Activated CD4-positive, alpha-beta memory T cell treated with anti-CD3 and anti-CD28 coated beads, Interleukin-2, amount 10 ng/mL, durations not matched to agents 7 days and 5 days (primary cell): ENCODE measurements at regions of chr3 and their contacts with region 1.

Region 1: GRCh38 chr3:156554842-156555687 is at the start of gene SSR3:
- DNase-seq: peak; percentile 99
- H3K4me3 Mint-ChIP-seq: peak within 1 kb of the TSS; percentile 96
- H3K27ac Mint-ChIP-seq: peak within 1 kb of the TSS; percentile 84
- H3K4me1 Mint-ChIP-seq: peaks cover 48% of the 10 kb centered on the region
- H3K27me3 Mint-ChIP-seq: no peaks in the 10 kb centered on the region
- total RNA-seq, gene SSR3: 167 to 174 TPM

Region 2: GRCh38 chr3:156483961-156484787 is 70.9 kb before region 1 on chr3:
- CTCF ChIA-PET with region 1: interaction called, 6 read pairs
- POLR2A ChIA-PET with region 1: interaction called, 25 read pairs
- DNase-seq: peak; percentile 62
- H3K4me3 Mint-ChIP-seq: peak overlapping the region; percentile 72
- H3K27ac Mint-ChIP-seq: peak overlapping the region; percentile 88
- H3K4me1 Mint-ChIP-seq: peaks cover 42% of the 10 kb centered on the region
- H3K27me3 Mint-ChIP-seq: no peaks in the 10 kb centered on the region

Region 3: DNA sequence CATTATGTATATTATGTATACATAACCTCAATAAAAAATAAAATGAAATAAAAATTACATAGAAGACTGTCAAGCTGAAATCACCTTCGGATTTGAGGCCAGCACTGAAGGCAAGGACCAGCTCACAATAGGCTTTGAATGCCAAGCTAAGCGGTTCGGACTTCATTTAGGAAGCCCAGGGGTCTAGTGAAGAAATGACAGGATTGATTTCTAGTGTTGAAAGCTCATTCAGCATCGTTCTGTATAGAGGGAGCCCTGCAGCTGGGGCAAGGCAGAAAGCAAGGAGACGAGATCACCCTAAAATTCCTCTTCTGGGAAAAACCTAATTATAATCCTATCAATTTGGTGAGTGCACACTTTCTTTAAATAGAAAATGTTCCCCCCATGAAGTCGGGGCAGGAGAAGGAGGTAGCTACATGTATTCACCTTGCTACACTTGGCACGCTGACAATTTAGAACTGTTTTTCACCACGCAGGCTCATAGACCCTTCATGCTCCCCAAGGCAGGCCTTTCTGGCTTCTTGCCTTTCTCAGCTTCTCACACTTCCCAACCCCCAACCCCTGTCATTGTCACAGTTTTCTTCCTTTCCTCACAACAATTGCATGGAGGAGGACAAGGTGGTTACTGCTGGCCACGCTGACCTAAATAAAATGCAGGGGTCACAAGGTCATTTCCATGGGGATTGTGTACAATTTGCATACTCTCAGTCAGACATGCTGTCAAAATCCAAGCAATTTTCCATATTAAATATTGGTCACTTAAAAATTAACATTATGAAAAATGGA is 44.2 kb after region 1 on chr3:
- CTCF ChIA-PET with region 1: no interaction called
- POLR2A ChIA-PET with region 1: no interaction called
- DNase-seq: no peak
- H3K4me3 Mint-ChIP-seq: no peak overlapping the region
- H3K27ac Mint-ChIP-seq: no peak overlapping the region
- H3K4me1 Mint-ChIP-seq: peaks cover 15% of the 10 kb centered on the region
- H3K27me3 Mint-ChIP-seq: peaks cover 11% of the 10 kb centered on the region

Region 4: DNA sequence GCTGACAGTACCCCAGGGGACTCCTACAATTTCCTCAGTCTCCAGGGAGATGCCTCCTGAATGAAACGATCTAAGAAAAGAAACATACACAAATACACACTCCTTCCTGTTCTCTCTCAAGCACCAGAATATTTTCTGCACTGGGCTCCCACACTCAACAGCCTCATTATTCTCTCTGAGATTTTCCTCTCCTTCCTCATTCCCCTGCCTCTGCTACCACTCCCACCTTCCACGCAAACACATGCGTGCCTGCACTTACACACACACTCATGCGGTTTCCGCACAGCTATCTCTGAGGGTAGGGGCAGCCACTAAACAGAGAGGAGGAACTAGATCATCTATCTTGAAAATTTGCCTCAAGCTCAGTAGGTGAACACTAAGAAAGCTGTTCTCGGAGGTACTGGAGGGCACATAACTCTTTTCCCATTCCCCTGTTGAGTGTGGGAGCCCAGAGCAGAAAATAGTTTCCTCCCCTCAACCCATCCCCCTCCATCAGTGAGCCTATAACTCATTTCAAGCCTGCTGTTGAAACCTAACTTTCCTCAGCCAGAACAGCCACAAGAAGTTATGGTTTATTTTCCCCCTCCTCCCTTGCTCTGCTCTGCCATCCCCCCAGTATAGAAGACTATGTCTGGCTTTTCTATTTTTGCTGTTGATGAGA is 88.8 kb after region 1 on chr3:
- CTCF ChIA-PET with region 1: no interaction called
- POLR2A ChIA-PET with region 1: interaction called, 12 read pairs
- DNase-seq: peak; percentile 66
- H3K4me3 Mint-ChIP-seq: peak overlapping the region; percentile 43
- H3K27ac Mint-ChIP-seq: peak overlapping the region; percentile 80
- H3K4me1 Mint-ChIP-seq: peaks cover 23% of the 10 kb centered on the region
- H3K27me3 Mint-ChIP-seq: peaks cover 8% of the 10 kb centered on the region

Region 5: GRCh38 chr3:156664831-156665178 is 109.7 kb after region 1 on chr3:
- CTCF ChIA-PET with region 1: interaction called, 8 read pairs
- POLR2A ChIA-PET with region 1: interaction called, 26 read pairs
- DNase-seq: no peak
- H3K4me3 Mint-ChIP-seq: peak overlapping the region; percentile 59
- H3K27ac Mint-ChIP-seq: peak overlapping the region; percentile 92
- H3K4me1 Mint-ChIP-seq: peaks cover 68% of the 10 kb centered on the region
- H3K27me3 Mint-ChIP-seq: no peaks in the 10 kb centered on the region

Region 6: DNA sequence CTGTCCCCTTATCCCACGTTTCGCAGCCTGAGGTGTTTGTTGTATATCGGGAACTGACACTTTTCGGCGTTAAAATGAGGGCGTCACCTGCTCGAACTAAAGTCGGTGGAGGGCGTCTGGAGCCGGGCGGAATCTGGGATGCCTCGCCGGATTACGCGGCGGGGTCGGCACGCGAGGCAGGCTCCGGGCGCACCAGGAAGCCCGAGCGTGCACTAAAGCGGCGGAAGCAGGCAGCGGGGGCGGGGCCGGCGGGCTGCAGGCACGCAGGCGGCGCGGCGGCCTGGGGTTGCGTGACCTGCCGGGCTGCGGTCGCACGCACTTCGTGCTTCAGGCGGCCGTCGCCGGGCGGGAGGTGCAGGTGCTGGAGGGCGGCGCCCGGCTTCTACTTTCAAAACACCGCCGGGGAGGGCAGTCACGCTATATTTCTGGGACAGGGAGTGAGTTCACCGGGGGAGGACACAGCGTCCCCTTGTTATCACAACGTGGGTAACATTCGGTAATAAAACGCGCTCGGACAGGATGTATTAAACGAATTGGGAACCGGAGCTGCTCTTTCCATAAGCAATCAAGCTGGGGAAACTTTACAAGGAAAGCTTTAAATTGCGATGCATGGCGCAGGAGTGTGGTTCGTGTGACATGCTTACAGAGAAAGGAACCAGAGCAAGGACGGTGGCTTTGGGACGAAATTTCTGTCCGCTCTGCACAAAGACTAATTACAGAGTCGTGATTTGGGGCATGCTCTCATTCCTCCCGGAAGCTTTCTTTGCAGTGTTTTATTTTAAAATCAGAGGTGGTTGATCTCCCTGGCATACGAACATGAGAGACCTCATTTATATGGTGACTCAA is 262.0 kb after region 1 on chr3:
- CTCF ChIA-PET with region 1: interaction called, 3 read pairs
- POLR2A ChIA-PET with region 1: interaction called, 10 read pairs
- DNase-seq: peak; percentile 93
- H3K4me3 Mint-ChIP-seq: peak overlapping the region; percentile 86
- H3K27ac Mint-ChIP-seq: peak overlapping the region; percentile 96
- H3K4me1 Mint-ChIP-seq: peaks cover 71% of the 10 kb centered on the region
- H3K27me3 Mint-ChIP-seq: no peaks in the 10 kb centered on the region

Region 7: DNA sequence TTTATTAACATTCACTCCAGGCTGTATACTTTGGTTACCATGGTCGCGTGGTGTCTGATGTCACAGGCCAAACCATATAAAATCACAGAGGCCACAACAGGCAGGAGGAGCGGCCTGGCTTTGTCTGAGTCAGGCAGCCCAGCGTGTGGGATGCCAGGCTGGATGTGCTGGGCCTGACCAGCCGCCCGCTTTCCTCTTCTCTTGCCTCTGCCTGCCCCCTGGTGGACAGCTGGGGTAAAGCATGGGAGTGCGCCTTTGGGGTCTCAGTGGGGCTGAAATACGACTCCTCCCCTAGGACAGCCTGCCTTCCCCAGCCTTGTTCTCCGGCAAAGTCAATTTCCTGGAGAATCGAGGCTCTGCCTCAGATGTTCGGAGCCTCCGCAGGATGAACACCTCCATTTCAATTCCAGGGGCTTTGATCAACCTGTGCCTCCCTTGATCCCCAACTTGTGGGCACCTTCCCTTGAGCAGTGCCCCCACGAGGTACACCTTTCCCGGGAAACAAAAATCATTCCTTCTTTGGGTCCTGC is 526.7 kb after region 1 on chr3:
- CTCF ChIA-PET with region 1: interaction called, 10 read pairs
- POLR2A ChIA-PET with region 1: interaction called, 26 read pairs
- DNase-seq: peak; percentile 85
- H3K4me3 Mint-ChIP-seq: no peak overlapping the region
- H3K27ac Mint-ChIP-seq: no peak overlapping the region
- H3K4me1 Mint-ChIP-seq: peaks cover 46% of the 10 kb centered on the region
- H3K27me3 Mint-ChIP-seq: no peaks in the 10 kb centered on the region

Region 8: DNA sequence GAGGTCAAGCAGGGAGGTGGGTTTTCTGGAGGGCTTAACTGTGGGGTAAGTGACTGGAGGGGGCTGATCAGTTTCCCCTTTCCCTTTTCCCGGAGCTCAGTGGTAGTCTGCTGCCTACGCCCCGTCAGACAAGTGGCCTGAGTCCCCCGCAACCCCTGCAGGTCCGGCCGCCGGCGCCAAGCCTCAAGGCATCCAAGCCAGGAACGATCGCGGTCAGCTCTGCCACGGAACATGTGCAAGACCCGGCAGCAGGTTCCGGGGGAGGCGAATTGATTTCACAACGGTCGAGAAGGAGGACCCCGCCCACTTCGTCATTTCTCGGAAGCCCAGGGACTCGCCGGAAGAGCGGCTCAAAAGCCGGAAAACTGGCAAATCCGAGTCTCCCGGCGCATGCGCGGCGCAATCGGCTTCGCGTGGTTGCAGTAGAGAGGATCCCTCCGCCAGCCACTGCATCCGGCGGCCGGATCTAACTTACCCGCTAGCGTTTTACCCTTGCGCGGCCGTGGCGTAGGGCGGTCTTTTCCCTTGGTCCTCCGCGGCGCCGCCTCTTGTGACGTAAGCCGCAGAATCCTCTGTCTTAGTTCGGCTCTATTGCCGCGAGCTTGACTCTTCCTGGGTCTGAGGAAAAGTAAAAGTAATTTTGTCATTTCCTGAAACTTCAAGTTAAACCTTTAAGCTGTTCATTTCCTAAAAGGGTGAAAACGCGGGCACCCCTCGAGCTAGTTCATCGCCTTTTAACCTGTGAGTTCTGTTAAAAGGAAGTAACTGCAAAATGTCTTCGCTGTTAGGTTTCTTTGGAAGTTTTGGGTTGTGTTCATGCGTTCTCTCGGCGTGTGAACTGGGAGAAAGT is 619.8 kb after region 1 on chr3:
- CTCF ChIA-PET with region 1: interaction called, 3 read pairs
- POLR2A ChIA-PET with region 1: interaction called, 14 read pairs
- DNase-seq: peak; percentile 99
- H3K4me3 Mint-ChIP-seq: peak overlapping the region; percentile 89
- H3K27ac Mint-ChIP-seq: peak overlapping the region; percentile 97
- H3K4me1 Mint-ChIP-seq: peaks cover 21% of the 10 kb centered on the region
- H3K27me3 Mint-ChIP-seq: peaks cover 4% of the 10 kb centered on the region